ENCODE measurements at regions of chr16 and their contacts with region 1.

Region 1: DNA sequence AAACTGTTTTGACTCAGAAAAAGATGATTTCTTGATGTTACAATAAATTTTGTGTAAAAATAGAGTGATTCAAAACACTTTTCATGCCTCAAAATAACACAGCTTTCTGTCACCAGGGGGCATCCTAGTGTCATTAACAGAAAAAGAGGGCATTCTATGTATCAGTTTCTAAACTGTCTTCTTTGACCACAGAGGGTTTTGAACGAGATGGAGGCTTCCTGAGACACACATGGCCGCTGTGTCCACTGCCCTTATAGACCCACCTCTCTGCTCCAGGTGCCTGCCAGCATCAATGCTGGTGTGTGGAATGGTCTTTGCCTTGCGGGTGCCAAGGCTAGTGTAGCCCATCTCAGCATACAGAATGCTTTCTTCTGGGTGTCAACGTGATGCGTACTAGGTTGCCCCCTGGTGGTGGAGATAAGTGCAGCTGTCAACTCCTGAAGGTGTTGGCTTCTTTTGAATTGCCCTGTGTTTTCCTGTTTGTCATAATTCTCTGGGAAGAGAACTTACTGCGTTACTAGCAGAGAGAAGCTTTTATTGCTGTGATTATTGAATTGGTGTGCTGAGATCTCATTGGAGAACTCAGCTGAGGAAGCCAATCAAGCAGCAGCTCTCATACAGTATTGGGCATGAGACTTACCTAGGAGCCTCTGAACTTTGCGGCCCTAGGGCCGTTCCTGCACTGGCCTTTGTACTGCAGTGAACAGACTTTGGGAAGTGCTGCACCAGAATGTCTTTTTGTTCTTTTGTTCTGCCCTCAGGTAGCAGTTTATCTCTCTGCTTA is 38.6 kb downstream of the USP10 start:
- DNase-seq: no peak
- H3K4me3 ChIP-seq: no peak overlapping the region
- CTCF ChIP-seq: peak; percentile 82

Region 2: DNA sequence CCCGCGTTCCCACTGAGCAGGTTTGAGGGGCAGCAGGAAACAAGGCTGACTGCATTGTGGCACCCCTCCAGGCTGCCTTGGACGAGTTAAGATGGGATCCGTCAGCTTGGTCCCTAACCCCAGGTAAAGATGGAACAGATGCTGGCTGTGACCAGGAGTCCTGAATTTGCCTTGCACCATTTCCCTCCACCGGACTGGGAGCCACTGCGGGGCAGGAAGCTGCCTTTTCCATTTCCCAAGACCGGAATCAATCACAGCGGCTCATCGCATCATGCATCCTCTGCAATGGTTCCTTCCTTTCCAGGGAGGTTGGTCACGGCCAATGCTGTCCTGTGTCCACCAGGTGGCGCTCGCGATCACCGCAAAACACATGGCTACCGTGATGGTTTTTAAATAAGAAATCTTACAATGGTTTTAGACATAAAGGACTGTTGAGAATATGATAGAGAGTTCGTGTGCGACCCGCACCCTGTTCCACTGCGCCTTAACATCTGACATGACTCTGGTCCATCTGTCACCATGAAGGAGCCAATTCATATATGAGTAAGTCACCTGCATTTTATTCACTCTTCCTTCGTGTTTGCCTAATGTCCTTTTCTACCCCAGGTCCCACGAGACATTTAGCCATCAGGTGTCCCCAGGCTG is 227.1 kb before region 1 on chr16:
- CTCF ChIA-PET with region 1: interaction called, 17 read pairs
- POLR2A ChIA-PET with region 1: no interaction called
- DNase-seq: peak; percentile 36
- H3K4me3 ChIP-seq: no peak overlapping the region
- CTCF ChIP-seq: peak; percentile 85

Region 3: DNA sequence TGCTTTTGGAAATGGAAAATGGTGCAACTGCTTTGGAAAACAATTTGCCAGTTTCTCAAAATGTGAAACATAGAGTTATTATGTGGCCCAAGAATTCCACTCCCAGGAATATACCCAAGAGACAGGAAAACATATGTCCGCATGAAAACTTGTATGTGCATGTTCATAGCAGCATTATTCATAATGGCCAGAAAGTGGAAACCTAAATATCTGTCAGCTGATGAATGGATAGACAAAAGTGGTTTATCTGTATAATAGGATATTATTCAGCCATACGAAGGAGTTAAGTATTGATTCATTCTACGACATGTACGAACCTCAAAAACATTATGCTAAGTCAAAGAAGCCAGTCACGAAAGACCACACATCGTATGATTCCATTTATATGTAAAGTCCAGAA is 112.9 kb before region 1 on chr16:
- CTCF ChIA-PET with region 1: interaction called, 185 read pairs
- POLR2A ChIA-PET with region 1: no interaction called
- DNase-seq: no peak
- H3K4me3 ChIP-seq: no peak overlapping the region
- CTCF ChIP-seq: no peak

Region 4: GRCh38 chr16:84672276-84673202 is 65.9 kb before region 1 on chr16:
- CTCF ChIA-PET with region 1: interaction called, 665 read pairs
- POLR2A ChIA-PET with region 1: no interaction called
- DNase-seq: no peak
- H3K4me3 ChIP-seq: no peak overlapping the region
- CTCF ChIP-seq: peak; percentile 89

Region 5: DNA sequence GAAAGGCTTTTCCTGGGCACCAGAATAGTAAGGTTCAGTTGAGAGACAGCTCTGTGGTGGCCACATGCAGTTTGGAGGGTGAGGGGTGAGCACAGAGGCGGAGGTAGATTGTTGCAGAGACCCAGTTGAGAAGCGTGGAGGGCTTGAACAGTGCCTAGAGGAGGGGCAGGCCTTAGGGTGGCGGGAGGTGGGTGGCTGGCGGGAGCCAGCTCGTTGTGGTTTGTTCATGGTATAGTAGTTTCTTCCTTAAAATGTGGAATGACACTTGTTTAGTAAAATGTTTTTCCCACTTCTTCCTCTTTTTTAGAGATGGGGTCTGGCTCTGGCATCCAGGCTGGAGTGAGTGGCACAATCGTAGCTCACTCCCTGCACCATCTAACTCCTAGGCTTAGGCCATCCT is 24.4 kb before region 1 on chr16:
- CTCF ChIA-PET with region 1: interaction called, 102 read pairs
- POLR2A ChIA-PET with region 1: no interaction called
- DNase-seq: no peak
- H3K4me3 ChIP-seq: no peak overlapping the region
- CTCF ChIP-seq: no peak

Region 6: GRCh38 chr16:84754353-84754856 is 16.0 kb after region 1 on chr16:
- CTCF ChIA-PET with region 1: interaction called, 147 read pairs
- POLR2A ChIA-PET with region 1: interaction called, 3 read pairs
- DNase-seq: peak; percentile 67
- H3K4me3 ChIP-seq: no peak overlapping the region
- CTCF ChIP-seq: peak; percentile 56

Measured in AG04449 (cell line).